Calu3 (cell line): ENCODE measurements at regions of chr4 and their contacts with region 1.

Region 1: GRCh38 chr4:173025131-173025530 is 143.5 kb upstream of the GALNT7 start:
- DNase-seq: peak; percentile 72
- H3K4me3 Mint-ChIP-seq: no peak overlapping the region
- H3K27ac Mint-ChIP-seq: no peak overlapping the region
- H3K4me1 Mint-ChIP-seq: peaks cover 21% of the 10 kb centered on the region
- H3K27me3 Mint-ChIP-seq: peaks cover 10% of the 10 kb centered on the region
- CTCF ChIP-seq: peak; percentile 60

Region 2: DNA sequence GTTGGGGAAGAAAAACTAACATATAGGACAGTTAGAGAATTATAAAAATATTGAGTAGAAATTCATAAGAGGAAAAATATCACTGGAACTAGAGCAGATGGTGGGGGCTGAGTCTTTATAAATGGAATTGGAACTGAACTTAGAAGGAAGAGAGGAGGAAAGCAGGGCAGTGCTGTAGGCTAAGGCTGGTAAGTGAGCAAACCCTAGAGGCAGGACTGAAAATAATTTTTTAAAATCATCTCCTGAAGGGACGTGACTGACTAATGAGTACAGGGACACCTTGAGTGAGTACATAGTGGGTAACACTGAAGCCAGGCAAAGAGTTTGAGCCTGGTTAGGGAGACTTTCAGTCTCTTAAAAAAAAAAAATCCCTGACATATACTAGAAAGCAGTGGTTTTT is 206.8 kb after region 1 on chr4:
- CTCF ChIA-PET with region 1: no interaction called
- intact Hi-C with region 1: loop called (anchors 5 kb)
- DNase-seq: no peak
- H3K4me3 Mint-ChIP-seq: no peak overlapping the region
- H3K27ac Mint-ChIP-seq: no peak overlapping the region
- H3K4me1 Mint-ChIP-seq: peaks cover 8% of the 10 kb centered on the region
- H3K27me3 Mint-ChIP-seq: no peaks in the 10 kb centered on the region
- CTCF ChIP-seq: no peak

Region 3: DNA sequence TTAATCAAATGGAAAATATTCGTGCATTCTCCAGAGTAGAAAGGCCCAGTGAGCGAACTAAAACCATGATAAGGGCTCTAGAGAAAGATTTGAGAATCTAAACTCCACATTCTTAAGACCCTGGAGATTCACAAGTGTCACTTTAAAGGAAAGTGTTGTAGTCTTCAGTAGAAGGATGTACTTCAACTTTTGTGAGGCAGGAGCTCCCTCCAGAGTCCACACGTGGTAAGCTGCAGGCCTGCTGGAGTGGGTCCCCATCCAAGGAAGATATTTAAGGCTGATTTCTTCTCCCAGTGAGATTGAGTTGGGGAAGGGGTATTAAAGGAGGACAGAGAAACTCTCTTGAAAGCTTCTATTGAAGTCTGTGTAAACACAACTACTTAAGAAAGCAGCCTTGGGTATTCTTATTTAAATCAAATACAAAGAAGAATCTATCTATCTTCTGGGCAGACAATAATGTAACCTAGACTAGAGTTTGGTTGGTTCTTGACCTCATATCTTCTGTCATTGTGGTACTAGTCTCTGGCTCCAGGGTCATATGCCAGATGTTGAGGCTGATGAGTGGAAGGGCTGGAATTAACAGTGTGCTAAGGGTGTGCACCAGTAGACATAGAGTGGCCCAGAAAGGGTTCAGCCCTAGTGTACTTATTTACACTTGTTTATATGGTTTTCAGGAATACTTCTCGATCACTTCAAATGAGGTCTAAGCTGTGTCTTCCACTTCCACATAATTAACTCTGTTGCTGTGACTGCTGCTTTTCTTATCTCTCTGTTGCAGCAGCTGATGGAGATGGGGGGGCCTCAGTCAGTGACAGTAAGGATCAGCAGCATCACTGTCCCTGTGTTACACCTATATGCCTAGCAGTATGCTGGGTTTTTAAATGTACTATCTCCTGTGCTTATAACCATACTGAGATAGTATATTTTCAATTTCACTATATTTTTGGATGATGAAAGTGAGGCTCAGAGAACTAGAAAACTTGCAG is 232.9 kb after region 1 on chr4:
- CTCF ChIA-PET with region 1: interaction called, 9 read pairs
- intact Hi-C with region 1: loop called (anchors 1 kb)
- DNase-seq: peak; percentile 63
- H3K4me3 Mint-ChIP-seq: no peak overlapping the region
- H3K27ac Mint-ChIP-seq: no peak overlapping the region
- H3K4me1 Mint-ChIP-seq: peaks cover 8% of the 10 kb centered on the region
- H3K27me3 Mint-ChIP-seq: no peaks in the 10 kb centered on the region
- CTCF ChIP-seq: peak; percentile 39